ENCODE measurements at regions of chr1 and their contacts with region 1.

Region 1: GRCh38 chr1:71080739-71081696 is at the start of gene ZRANB2:
- DNase-seq: peak; percentile 92
- ATAC-seq: peak; percentile 98
- H3K4me3 Mint-ChIP-seq: peak within 1 kb of the TSS; percentile 99
- H3K27ac Mint-ChIP-seq: peak within 1 kb of the TSS; percentile 96
- H3K4me1 Mint-ChIP-seq: peaks cover 18% of the 10 kb centered on the region
- H3K27me3 Mint-ChIP-seq: peaks cover 13% of the 10 kb centered on the region
- total RNA-seq, gene ZRANB2: 114 to 148 TPM

Region 2: GRCh38 chr1:70205434-70206118 is 875.4 kb before region 1 on chr1 and contains the start of gene LRRC40:
- CTCF ChIA-PET with region 1: no interaction called
- POLR2A ChIA-PET with region 1: no interaction called
- intact Hi-C with region 1: loop called (anchors 1 kb)
- DNase-seq: peak; percentile 97
- ATAC-seq: peak; percentile 89
- H3K4me3 Mint-ChIP-seq: peak within 1 kb of the TSS; percentile 99
- H3K27ac Mint-ChIP-seq: peak within 1 kb of the TSS; percentile 99
- H3K4me1 Mint-ChIP-seq: peaks cover 66% of the 10 kb centered on the region
- H3K27me3 Mint-ChIP-seq: no peaks in the 10 kb centered on the region
- total RNA-seq, gene LRRC40: 23.2 to 26.4 TPM

Region 3: GRCh38 chr1:70221241-70222121 is 859.5 kb before region 1 on chr1 and contains the start of gene SRSF11:
- CTCF ChIA-PET with region 1: no interaction called
- POLR2A ChIA-PET with region 1: no interaction called
- intact Hi-C with region 1: loop called in 1 of 2 experiments (anchors 1 kb)
- DNase-seq: peak; percentile 99
- ATAC-seq: peak; percentile 94
- H3K4me3 Mint-ChIP-seq: peak within 1 kb of the TSS; percentile 95
- H3K27ac Mint-ChIP-seq: peak within 1 kb of the TSS; percentile 98
- H3K4me1 Mint-ChIP-seq: peaks cover 36% of the 10 kb centered on the region
- H3K27me3 Mint-ChIP-seq: no peaks in the 10 kb centered on the region
- total RNA-seq, gene SRSF11: 182 to 266 TPM

Region 4: GRCh38 chr1:70354332-70355110 is 726.5 kb before region 1 on chr1 and contains the start of gene ANKRD13C:
- CTCF ChIA-PET with region 1: no interaction called
- POLR2A ChIA-PET with region 1: interaction called, 3 read pairs
- intact Hi-C with region 1: loop called (anchors 1 to 2 kb)
- DNase-seq: peak; percentile 95
- ATAC-seq: peak; percentile 96
- H3K4me3 Mint-ChIP-seq: peak within 1 kb of the TSS; percentile 91
- H3K27ac Mint-ChIP-seq: peak within 1 kb of the TSS; percentile 100
- H3K4me1 Mint-ChIP-seq: peaks cover 33% of the 10 kb centered on the region
- H3K27me3 Mint-ChIP-seq: no peaks in the 10 kb centered on the region
- total RNA-seq, gene ANKRD13C: 13.9 TPM

Region 5: GRCh38 chr1:70410604-70411359 is 670.2 kb before region 1 on chr1 and contains the start of gene CTH:
- CTCF ChIA-PET with region 1: no interaction called
- POLR2A ChIA-PET with region 1: no interaction called
- intact Hi-C with region 1: loop called (anchors 2 kb)
- DNase-seq: peak; percentile 96
- ATAC-seq: peak; percentile 95
- H3K4me3 Mint-ChIP-seq: peak within 1 kb of the TSS; percentile 90
- H3K27ac Mint-ChIP-seq: peak within 1 kb of the TSS; percentile 83
- H3K4me1 Mint-ChIP-seq: peaks cover 13% of the 10 kb centered on the region
- H3K27me3 Mint-ChIP-seq: no peaks in the 10 kb centered on the region
- total RNA-seq, gene CTH: 25.3 to 29.8 TPM

Region 6: DNA sequence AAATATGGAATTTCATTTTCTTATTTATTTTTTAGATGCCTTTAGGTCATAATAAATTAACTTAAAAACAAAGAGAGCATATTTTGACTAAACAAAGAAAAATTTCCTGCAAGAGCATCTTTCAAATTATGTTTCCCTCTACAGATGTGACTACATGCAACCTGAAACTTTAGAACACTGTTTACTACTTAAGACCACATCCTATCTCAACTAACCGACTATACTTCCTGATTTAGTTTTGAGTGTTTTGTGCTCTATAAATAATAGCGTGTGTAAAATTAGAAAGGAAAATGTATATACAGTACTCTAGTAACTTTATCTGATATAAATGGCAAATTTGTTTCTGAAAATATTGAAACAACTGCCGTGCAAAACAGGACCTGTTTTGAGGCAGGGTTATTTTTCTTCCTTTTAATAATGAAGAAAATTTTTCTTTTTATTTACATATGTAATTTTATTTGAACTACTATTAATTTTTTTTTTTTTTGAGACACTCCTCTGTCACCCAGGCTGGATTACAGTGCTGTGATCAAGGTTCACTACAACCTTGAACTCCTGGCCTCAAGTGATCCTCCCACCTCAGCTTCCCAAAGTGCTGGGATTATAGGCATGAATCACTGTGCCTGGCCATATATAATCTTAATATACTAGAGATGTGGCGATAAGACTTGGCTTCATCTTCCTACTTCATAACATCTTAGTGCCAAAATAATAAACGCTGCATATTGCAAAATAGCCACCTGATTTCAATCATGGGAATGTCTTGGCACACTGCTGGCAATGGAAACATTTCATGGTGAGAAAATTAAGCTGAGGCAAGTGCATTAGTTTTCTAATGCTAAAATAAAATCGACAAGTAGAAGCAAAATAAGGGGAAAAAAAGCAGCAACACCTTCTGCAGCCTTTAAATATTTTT is 12.4 kb before region 1 on chr1:
- CTCF ChIA-PET with region 1: interaction called, 10 read pairs
- POLR2A ChIA-PET with region 1: interaction called, 3 read pairs
- intact Hi-C with region 1: loop called in 1 of 2 experiments (anchors 2 kb)
- DNase-seq: no peak
- ATAC-seq: peak; percentile 44
- H3K4me3 Mint-ChIP-seq: no peak overlapping the region
- H3K27ac Mint-ChIP-seq: peak overlapping the region; percentile 51
- H3K4me1 Mint-ChIP-seq: peaks cover 5% of the 10 kb centered on the region
- H3K27me3 Mint-ChIP-seq: no peaks in the 10 kb centered on the region

Region 7: DNA sequence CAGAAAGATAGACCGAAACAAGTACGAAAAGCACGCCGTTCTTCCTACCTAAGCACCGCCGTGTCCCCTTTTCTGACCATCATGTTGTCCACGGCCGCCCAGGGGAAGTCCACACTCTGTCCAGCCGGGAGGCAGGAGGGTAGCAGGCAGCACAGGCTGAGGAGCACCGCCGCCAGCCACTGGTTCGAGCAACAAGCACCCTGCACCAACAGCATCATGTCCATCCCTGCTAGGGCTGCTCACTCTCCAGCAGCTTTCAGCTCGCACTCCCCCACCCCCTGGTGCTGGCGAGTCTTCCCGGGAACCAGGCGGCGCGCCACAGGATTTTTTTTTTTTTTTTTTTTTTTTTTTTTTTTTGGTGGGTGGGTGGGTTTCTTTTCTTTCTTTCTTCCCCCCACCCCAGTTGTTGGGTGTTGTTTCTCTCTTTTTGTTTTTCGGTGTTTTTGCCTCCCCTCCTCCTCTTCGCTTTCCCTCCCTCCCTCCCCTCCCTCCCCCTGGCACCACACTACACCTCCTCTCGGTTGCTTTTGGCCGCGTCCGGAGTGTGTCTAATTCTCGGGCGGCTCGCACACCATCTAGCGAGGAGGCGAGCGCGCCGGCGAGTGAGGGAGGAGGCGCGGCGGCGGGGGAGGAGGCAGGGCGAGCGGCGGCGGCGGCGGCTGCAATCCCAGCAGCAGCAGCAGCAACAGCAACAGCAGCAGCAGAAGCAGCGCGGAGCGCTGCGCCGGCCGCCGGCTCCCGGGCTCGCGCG is 1201.4 kb after region 1 on chr1 and contains the start of gene NEGR1:
- CTCF ChIA-PET with region 1: no interaction called
- POLR2A ChIA-PET with region 1: no interaction called
- intact Hi-C with region 1: loop called in 1 of 2 experiments (anchors 5 kb)
- DNase-seq: peak; percentile 84
- ATAC-seq: peak; percentile 60
- H3K4me3 Mint-ChIP-seq: no peak within 1 kb of the TSS
- H3K27ac Mint-ChIP-seq: no peak within 1 kb of the TSS
- H3K4me1 Mint-ChIP-seq: peaks cover 16% of the 10 kb centered on the region
- H3K27me3 Mint-ChIP-seq: peaks cover 24% of the 10 kb centered on the region
- total RNA-seq, gene NEGR1: not detected